ENCODE measurements at regions of chr14 and their contacts with region 1.

Region 1: GRCh38 chr14:23057757-23058653 is 685 bp upstream of the CDH24 start:
- DNase-seq: peak; percentile 59 to 86
- H3K4me3 ChIP-seq: peak overlapping the region; percentile 64; the same call in 1 of the 2 replicates
- H3K27ac ChIP-seq: no peak overlapping the region
- H3K4me1 ChIP-seq: peaks cover 25% of the 10 kb centered on the region
- H3K27me3 ChIP-seq: no peaks in the 10 kb centered on the region
- CTCF ChIP-seq: peak; percentile 82

Region 2: DNA sequence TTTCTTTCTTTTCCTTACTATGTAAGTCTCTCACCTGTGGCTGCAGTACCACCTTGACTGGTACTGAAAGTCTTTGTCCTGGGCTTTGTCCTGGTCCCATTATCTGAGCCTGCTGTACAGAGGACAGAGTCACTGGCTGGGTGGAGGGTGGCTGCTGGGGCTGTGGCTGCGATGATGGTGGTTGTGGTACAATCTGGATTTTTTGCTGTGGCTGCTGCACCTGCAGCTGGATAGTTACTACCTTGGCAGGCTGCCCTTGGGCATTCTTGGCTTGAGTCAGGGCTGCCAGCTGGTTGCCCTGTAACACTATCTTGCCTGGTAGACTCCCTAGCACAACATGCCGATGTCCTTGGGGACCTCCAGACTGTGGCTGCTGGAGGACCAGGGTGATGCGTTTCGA is 1629.1 kb before region 1 on chr14:
- CTCF ChIA-PET with region 1: no interaction called
- POLR2A ChIA-PET with region 1: no interaction called
- intact Hi-C with region 1: no loop called
- DNase-seq: no peak
- H3K4me3 ChIP-seq: no peak overlapping the region
- H3K27ac ChIP-seq: no peak overlapping the region
- H3K4me1 ChIP-seq: no peaks in the 10 kb centered on the region
- H3K27me3 ChIP-seq: no peaks in the 10 kb centered on the region
- CTCF ChIP-seq: no peak

Region 3: GRCh38 chr14:21917699-21918436 is 1140.1 kb before region 1 on chr14:
- CTCF ChIA-PET with region 1: no interaction called
- POLR2A ChIA-PET with region 1: no interaction called
- intact Hi-C with region 1: loop called (anchors 5 kb)
- DNase-seq: peak; percentile 37 to 93
- H3K4me3 ChIP-seq: no peak overlapping the region
- H3K27ac ChIP-seq: peak overlapping the region; percentile 58
- H3K4me1 ChIP-seq: peaks cover 47% of the 10 kb centered on the region
- H3K27me3 ChIP-seq: no peaks in the 10 kb centered on the region
- CTCF ChIP-seq: peak; percentile 80

Region 4: DNA sequence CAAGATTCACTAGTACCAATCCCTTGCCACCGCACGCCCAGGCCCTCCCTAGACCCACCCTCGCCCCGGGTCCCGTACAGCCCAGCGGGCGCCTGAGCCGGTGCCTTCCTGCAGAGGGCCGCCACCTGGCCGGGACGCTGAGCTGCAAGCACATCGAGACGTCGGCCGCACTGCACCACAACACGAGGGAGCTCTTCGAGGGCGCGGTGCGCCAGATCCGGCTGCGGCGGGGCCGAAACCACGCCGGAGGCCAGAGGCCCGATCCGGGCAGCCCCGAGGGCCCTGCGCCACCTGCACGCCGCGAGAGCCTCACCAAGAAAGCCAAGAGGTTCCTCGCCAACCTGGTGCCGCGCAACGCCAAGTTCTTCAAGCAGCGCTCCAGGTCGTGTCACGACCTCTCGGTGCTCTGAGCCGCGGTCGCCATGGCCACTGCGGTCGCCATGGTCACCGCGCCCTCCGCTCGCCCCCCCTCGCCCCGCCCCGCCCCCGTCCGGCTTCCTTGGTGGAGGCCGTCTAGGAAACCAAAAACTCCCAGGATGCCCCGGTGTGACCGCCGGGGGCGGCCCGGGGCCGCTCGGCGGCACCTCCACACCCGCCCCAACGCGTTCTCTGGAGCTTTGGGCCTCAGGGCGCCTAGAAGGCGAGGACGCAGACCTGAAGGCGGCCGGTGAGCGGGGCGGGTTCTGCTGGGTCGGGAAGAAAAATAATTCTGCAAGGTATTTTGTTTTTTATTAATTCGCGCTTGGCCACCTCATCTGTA is 171.3 kb before region 1 on chr14:
- CTCF ChIA-PET with region 1: no interaction called
- POLR2A ChIA-PET with region 1: interaction called, 24 read pairs
- intact Hi-C with region 1: no loop called
- DNase-seq: peak; percentile 63 to 66
- H3K4me3 ChIP-seq: peak overlapping the region; percentile 68
- H3K27ac ChIP-seq: peak overlapping the region; percentile 61
- H3K4me1 ChIP-seq: peaks cover 7% of the 10 kb centered on the region; the same call in 1 of the 2 replicates
- H3K27me3 ChIP-seq: no peaks in the 10 kb centered on the region
- CTCF ChIP-seq: no peak; the same call in 1 of the 2 replicates

Region 5: GRCh38 chr14:22986508-22987054 is 71.4 kb before region 1 on chr14:
- CTCF ChIA-PET with region 1: interaction called, 6 read pairs
- POLR2A ChIA-PET with region 1: no interaction called
- intact Hi-C with region 1: loop called (anchors 1 kb)
- DNase-seq: peak; percentile 60 to 70
- H3K4me3 ChIP-seq: no peak overlapping the region
- H3K27ac ChIP-seq: no peak overlapping the region
- H3K4me1 ChIP-seq: 0 out of 2 replicates have a peak, but pooled peaks cover 4% of the 10 kb centered on the region
- H3K27me3 ChIP-seq: no peaks in the 10 kb centered on the region
- CTCF ChIP-seq: peak; percentile 82

Region 6: GRCh38 chr14:23068476-23069412 is 10.7 kb after region 1 on chr14:
- CTCF ChIA-PET with region 1: interaction called, 11 read pairs
- POLR2A ChIA-PET with region 1: interaction called, 8 read pairs
- intact Hi-C with region 1: no loop called
- DNase-seq: peak; percentile 72 to 77
- H3K4me3 ChIP-seq: no peak overlapping the region
- H3K27ac ChIP-seq: no peak overlapping the region
- H3K4me1 ChIP-seq: peaks cover 34% of the 10 kb centered on the region
- H3K27me3 ChIP-seq: no peaks in the 10 kb centered on the region
- CTCF ChIP-seq: peak; percentile 90